ENCODE measurements at regions of chr9 and their contacts with region 1.

Region 1: GRCh38 chr9:94030318-94031179 is 53.7 kb upstream of the PTPDC1 start:
- DNase-seq: peak; percentile 85
- ATAC-seq: peak; percentile 99
- H3K4me3 ChIP-seq: peak overlapping the region; percentile 58 to 90 (median 77)
- H3K4me3 Mint-ChIP-seq: peak overlapping the region; percentile 100
- H3K27ac ChIP-seq: peak overlapping the region; percentile 36 to 79
- H3K27ac Mint-ChIP-seq: peak overlapping the region; percentile 97
- H3K4me1 ChIP-seq: peaks cover 12 to 13% of the 10 kb centered on the region in 2 donors
- H3K4me1 Mint-ChIP-seq: peaks cover 15% of the 10 kb centered on the region
- H3K27me3 ChIP-seq: peaks cover 0 to 6% (median 0%) of the 10 kb centered on the region in 4 experiments
- H3K27me3 Mint-ChIP-seq: peaks cover 5% of the 10 kb centered on the region
- CTCF ChIP-seq: no peak

Region 2: GRCh38 chr9:93984860-93985259 is 45.7 kb before region 1 on chr9:
- CTCF ChIA-PET with region 1: no interaction called
- POLR2A ChIA-PET with region 1: no interaction called
- intact Hi-C with region 1: no loop called
- DNase-seq: no peak
- ATAC-seq: no peak
- H3K4me3 ChIP-seq: no peak overlapping the region
- H3K4me3 Mint-ChIP-seq: no peak overlapping the region
- H3K27ac ChIP-seq: no peak overlapping the region
- H3K27ac Mint-ChIP-seq: no peak overlapping the region
- H3K4me1 ChIP-seq: no peaks in the 10 kb centered on the region
- H3K4me1 Mint-ChIP-seq: no peaks in the 10 kb centered on the region
- H3K27me3 ChIP-seq: peaks cover 0 to 11% (median 2%) of the 10 kb centered on the region in 4 experiments
- H3K27me3 Mint-ChIP-seq: peaks cover 48% of the 10 kb centered on the region
- CTCF ChIP-seq: no peak

Region 3: GRCh38 chr9:94014065-94014654 is 16.4 kb before region 1 on chr9:
- CTCF ChIA-PET with region 1: interaction called, 12 read pairs
- POLR2A ChIA-PET with region 1: no interaction called
- intact Hi-C with region 1: no loop called
- DNase-seq: peak; percentile 24
- ATAC-seq: no peak
- H3K4me3 ChIP-seq: no peak overlapping the region
- H3K4me3 Mint-ChIP-seq: no peak overlapping the region
- H3K27ac ChIP-seq: no peak overlapping the region
- H3K27ac Mint-ChIP-seq: no peak overlapping the region
- H3K4me1 ChIP-seq: peaks cover 5 to 6% of the 10 kb centered on the region in 2 donors
- H3K4me1 Mint-ChIP-seq: peaks cover 5% of the 10 kb centered on the region
- H3K27me3 ChIP-seq: peaks cover 0 to 2% (median 0%) of the 10 kb centered on the region in 4 experiments
- H3K27me3 Mint-ChIP-seq: peaks cover 4% of the 10 kb centered on the region
- CTCF ChIP-seq: peak; percentile 70

Region 4: DNA sequence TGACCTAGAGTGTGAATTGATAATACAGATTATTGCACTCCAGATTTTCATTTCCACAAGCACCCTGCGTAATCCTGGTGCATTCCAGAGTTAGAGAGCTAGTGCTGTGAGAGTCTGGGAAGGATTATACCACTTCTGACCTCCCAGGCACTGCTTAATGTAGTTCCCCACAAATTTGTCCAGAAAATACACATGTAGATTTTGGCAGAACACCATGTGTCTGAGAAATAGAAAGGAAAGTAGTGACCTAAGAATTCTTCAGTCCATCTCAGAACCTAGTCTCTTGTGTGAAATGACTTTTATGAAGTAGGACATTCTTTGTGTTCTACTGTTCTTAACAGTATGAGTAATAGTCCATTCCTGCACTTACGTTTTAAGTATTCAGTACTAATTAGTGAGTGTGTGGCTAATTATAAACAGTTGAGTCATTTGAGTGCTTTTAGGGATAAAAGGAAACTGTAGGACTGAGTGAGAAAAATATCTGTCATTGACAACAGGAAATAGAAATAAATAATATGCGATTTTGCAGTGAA is 26.0 kb after region 1 on chr9:
- CTCF ChIA-PET with region 1: no interaction called
- POLR2A ChIA-PET with region 1: no interaction called
- intact Hi-C with region 1: no loop called
- DNase-seq: no peak
- ATAC-seq: no peak
- H3K4me3 ChIP-seq: no peak overlapping the region
- H3K4me3 Mint-ChIP-seq: no peak overlapping the region
- H3K27ac ChIP-seq: no peak overlapping the region
- H3K27ac Mint-ChIP-seq: no peak overlapping the region
- H3K4me1 ChIP-seq: no peaks in the 10 kb centered on the region
- H3K4me1 Mint-ChIP-seq: no peaks in the 10 kb centered on the region
- H3K27me3 ChIP-seq: no peaks in the 10 kb centered on the region
- H3K27me3 Mint-ChIP-seq: no peaks in the 10 kb centered on the region
- CTCF ChIP-seq: no peak

Region 5: DNA sequence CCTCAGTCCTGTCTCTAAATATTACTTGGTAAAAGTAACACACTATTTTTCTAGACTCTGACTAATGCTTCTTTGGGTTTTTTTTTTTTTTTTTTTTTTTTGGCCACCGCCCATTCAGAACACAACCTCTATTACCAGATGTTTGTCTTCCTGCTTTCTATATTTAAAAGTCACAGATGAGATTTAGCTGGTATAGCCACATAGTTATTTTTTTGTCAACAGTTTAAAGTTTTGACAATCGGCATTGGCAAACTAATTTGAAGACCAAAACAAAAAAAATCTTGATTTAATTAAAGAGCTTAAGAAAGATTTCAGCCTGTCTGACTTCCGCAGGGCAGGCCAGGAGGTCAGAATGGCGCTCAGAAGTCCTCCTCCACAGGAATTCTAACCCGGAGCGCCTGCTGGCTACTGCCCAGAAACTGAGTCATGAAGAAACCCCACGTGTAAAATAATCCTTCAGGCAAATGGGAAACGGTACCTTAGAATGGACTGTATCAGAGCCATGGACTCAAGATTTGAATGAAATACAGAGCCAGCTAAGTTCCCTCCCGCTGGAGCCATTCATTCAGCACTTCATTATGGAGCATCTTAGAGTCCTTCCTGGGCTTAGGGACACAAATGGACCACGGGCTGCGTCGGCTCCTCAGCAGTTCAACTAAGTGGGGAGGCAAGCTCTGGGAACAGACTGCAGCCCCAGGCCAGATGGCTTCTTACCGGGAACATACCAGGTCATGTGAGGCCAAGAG is 109.3 kb after region 1 on chr9:
- CTCF ChIA-PET with region 1: no interaction called
- POLR2A ChIA-PET with region 1: no interaction called
- intact Hi-C with region 1: no loop called
- DNase-seq: no peak
- ATAC-seq: no peak
- H3K4me3 ChIP-seq: no peak overlapping the region
- H3K4me3 Mint-ChIP-seq: no peak overlapping the region
- H3K27ac ChIP-seq: no peak overlapping the region
- H3K27ac Mint-ChIP-seq: no peak overlapping the region
- H3K4me1 ChIP-seq: no peaks in the 10 kb centered on the region
- H3K4me1 Mint-ChIP-seq: peaks cover 13% of the 10 kb centered on the region
- H3K27me3 ChIP-seq: no peaks in the 10 kb centered on the region
- H3K27me3 Mint-ChIP-seq: no peaks in the 10 kb centered on the region
- CTCF ChIP-seq: no peak

Region 6: DNA sequence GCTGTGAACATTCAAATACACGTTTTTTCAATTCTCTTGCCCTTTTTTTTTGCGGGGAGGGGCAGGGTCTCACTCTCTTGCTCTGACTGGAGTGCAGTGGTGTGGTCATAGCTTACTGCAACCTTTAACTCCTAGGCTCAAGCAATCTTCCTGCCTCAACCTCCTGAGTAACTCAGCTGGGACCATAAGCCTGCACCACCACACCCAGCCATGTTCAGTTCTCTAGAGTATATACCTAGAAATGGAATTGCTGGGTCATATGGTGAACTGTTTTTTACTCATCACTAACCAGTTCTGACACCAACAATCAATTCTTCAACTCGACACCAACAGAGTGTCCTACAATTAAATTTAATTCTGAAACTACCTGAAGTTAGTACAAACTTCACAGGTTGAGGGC is 143.1 kb after region 1 on chr9:
- CTCF ChIA-PET with region 1: no interaction called
- POLR2A ChIA-PET with region 1: no interaction called
- intact Hi-C with region 1: loop called (anchors 2 kb)
- DNase-seq: no peak
- ATAC-seq: no peak
- H3K4me3 ChIP-seq: no peak overlapping the region
- H3K4me3 Mint-ChIP-seq: peak overlapping the region; percentile 38
- H3K27ac ChIP-seq: peak overlapping the region in 1 of 2 donors; percentile 49
- H3K27ac Mint-ChIP-seq: peak overlapping the region; percentile 37
- H3K4me1 ChIP-seq: peaks cover 42 to 66% of the 10 kb centered on the region in 2 donors
- H3K4me1 Mint-ChIP-seq: peaks cover 76% of the 10 kb centered on the region
- H3K27me3 ChIP-seq: no peaks in the 10 kb centered on the region
- H3K27me3 Mint-ChIP-seq: no peaks in the 10 kb centered on the region
- CTCF ChIP-seq: no peak